Posterior vena cava (tissue), 2 donors: ENCODE measurements at regions of chr9 and their contacts with region 1.

Region 1: GRCh38 chr9:133149126-133150107 is 14.3 kb downstream of the GBGT1 start:
- DNase-seq: peak; percentile 97

Region 2: GRCh38 chr9:133048569-133048968 is 100.8 kb before region 1 on chr9:
- intact Hi-C with region 1: loop called in 1 of 2 experiments (anchors 10 kb)
- DNase-seq: no peak

Region 3: GRCh38 chr9:133103183-133103986 is 46.0 kb before region 1 on chr9:
- intact Hi-C with region 1: loop called (anchors 2 to 5 kb)
- DNase-seq: peak; percentile 90

Region 4: DNA sequence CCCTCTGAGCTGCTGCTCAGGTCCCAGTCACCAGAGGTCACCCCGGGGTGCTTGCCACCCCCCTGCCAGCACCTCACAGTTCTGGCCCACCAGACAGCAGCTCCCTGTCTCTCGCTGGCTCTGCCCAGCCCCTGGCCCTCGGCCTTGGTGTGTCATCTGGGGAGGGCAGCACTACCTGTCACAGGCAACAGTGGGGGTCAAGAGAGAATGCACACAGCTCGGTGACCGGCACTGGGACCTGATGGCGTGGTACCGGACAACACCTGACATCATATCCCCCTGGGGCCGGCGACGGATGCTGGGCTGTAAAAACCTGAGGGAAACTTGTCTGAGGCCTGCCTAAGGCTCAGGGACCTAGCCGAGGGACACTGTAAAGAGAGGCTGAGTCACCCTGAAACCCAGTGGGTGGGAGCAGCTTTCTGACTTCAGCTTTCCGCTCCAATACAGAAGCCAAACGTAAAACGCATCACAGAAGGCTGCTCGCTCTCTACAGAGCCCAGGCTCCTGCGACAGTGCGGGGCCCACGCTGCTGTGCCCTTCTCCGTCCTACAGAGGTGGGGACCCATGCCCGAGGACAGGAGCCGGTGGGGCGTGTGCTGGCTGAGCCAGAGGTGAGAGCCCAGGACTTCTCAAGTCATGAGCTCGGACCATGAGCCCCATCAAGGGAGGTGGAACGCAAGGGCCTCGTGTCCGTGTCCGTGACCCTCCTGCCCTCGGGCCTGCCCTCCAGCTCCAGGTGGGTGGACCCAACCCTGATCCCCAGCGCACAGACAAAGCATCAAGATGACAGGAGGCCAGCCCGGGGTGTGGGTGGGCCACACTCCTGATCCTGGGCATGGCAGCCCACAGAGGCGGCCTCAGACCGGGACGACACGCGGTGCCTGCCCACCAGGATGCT is 33.7 kb before region 1 on chr9:
- intact Hi-C with region 1: loop called in 1 of 2 experiments (anchors 1 kb)
- DNase-seq: peak; percentile 78

Region 5: GRCh38 chr9:133274236-133275104 is 125.1 kb after region 1 on chr9:
- intact Hi-C with region 1: no loop called
- DNase-seq: no peak